Heart right ventricle (tissue), 16 donors: ENCODE measurements at regions of chr6 and their contacts with region 1.

Region 1: DNA sequence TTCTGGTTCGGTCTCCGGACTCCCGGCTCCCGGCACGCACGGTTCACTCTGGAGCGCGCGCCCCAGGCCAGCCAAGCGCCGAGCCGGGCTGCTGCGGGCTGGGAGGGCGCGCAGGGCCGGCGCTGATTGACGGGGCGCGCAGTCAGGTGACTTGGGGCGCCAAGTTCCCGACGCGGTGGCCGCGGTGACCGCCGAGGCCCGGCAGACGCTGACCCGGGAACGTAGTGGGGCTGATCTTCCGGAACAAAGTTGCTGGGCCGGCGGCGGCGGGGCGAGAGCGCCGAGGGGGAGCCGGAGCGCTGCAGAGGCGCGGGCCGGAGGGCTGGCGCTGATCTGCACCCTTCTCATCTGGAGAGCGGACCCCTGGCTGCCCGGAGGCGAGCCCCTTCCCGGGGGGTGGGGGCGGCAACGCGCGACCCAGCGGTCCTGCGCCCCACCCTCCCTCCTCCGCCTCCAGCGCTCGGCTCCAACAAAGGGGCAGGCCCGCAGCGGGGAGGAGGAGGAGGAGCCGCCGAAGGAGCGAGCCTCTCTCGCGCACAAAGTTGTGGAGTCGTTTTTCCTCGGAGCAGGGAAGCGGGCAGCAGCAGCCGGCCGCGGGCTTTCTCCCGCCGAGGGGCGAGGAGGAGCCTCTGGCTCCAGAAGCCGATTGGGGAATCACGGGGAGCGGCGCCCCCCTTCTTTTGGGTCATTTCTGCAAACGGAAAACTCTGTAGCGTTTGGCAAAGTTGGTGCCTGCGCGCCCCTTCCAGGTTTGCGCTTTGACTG is at the start of gene UTRN:
- DNase-seq: peak; percentile 84 to 85
- ATAC-seq: peak; percentile 78 to 87 (median 85)
- H3K4me3 ChIP-seq: peak within 1 kb of the TSS; percentile 67 to 96 (median 82)
- H3K27ac ChIP-seq: peak within 1 kb of the TSS; percentile 93 to 98 (median 96)
- H3K4me1 ChIP-seq: peaks cover 0 to 24% (median 18%) of the 10 kb centered on the region in 9 donors
- H3K27me3 ChIP-seq: no peaks in the 10 kb centered on the region
- CTCF ChIP-seq: peak in 3 of 9 donors; percentile 8 to 23 (median 10)
- total RNA-seq, gene UTRN: 54.4 to 109 (median 85.5) TPM

Region 2: GRCh38 chr6:144149891-144150709 is 134.9 kb before region 1 on chr6 and contains the start of gene STX11:
- intact Hi-C with region 1: loop called in 2 of 10 experiments (anchors 5 kb)
- DNase-seq: peak; percentile 73 to 80
- ATAC-seq: peak; percentile 93 to 98 (median 94)
- H3K4me3 ChIP-seq: peak within 1 kb of the TSS; percentile 59 to 85 (median 78)
- H3K27ac ChIP-seq: peak within 1 kb of the TSS in 9 of 10 donors; percentile 46 to 94 (median 79)
- H3K4me1 ChIP-seq: peaks cover 0 to 47% (median 13%) of the 10 kb centered on the region in 9 donors
- H3K27me3 ChIP-seq: no peaks in the 10 kb centered on the region
- CTCF ChIP-seq: no peak
- total RNA-seq, gene STX11: 6.9 to 15.9 (median 8.9) TPM

Region 3: DNA sequence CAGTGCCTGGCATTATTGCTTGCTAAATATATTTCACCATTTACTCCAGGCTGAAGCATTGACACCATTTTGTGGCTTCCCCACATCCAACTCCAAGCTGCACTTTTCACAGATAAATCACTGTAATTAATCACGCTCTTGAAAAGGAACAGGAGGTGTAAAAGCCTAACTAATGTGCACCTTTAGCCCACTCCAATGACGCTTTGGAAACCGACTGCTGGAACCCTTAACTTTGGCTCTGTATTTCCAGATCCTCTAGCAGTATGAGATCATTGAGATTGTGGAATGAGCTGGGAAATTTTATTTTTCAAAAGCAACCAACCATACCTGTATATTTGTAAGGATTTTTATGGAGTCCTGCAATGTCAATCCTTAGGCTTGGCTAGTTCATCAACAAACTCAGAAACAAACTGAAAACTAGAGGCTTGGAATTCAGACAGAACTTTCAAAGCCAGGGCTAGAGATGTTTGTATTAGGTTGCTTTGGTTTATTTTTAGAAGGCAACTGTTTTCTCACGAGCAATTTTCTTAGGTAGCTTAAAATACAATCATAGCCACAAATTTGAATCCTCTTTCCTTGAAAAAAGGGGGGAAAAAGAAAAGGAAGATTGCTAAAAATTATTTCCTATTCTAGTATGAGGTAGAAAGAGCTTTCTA is 52.7 kb before region 1 on chr6:
- intact Hi-C with region 1: no loop called
- DNase-seq: no peak
- ATAC-seq: no peak
- H3K4me3 ChIP-seq: no peak overlapping the region
- H3K27ac ChIP-seq: peak overlapping the region in 4 of 10 donors; percentile 5 to 59 (median 18)
- H3K4me1 ChIP-seq: peaks cover 0 to 23% (median 14%) of the 10 kb centered on the region in 9 donors
- H3K27me3 ChIP-seq: no peaks in the 10 kb centered on the region
- CTCF ChIP-seq: no peak

Region 4: DNA sequence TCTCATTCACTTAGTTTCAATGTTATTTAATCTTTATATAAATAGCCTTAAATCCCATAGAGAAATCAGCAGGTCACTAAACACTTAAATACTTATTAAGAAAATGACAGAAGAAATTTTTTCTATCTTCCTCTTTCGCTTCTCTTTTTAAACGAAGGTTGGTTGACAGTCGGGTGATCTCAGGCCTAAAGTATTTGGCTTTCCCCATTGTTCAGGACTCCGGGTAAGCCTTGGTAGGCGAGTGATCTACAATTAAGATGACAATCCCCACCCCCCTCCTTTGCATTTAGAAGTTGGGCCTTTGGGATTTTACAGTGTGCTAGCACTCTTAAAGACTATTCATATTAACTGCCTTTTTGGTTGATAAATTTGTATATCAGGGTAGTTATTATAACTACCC is 19.6 kb before region 1 on chr6:
- intact Hi-C with region 1: loop called in 2 of 10 experiments (anchors 1 to 2 kb)
- DNase-seq: peak in 1 of 2 donors; percentile 29
- ATAC-seq: peak; percentile 34 to 75 (median 49)
- H3K4me3 ChIP-seq: no peak overlapping the region
- H3K27ac ChIP-seq: peak overlapping the region; percentile 19 to 91 (median 72)
- H3K4me1 ChIP-seq: peaks cover 7 to 35% (median 26%) of the 10 kb centered on the region in 9 donors
- H3K27me3 ChIP-seq: no peaks in the 10 kb centered on the region
- CTCF ChIP-seq: no peak

Region 5: DNA sequence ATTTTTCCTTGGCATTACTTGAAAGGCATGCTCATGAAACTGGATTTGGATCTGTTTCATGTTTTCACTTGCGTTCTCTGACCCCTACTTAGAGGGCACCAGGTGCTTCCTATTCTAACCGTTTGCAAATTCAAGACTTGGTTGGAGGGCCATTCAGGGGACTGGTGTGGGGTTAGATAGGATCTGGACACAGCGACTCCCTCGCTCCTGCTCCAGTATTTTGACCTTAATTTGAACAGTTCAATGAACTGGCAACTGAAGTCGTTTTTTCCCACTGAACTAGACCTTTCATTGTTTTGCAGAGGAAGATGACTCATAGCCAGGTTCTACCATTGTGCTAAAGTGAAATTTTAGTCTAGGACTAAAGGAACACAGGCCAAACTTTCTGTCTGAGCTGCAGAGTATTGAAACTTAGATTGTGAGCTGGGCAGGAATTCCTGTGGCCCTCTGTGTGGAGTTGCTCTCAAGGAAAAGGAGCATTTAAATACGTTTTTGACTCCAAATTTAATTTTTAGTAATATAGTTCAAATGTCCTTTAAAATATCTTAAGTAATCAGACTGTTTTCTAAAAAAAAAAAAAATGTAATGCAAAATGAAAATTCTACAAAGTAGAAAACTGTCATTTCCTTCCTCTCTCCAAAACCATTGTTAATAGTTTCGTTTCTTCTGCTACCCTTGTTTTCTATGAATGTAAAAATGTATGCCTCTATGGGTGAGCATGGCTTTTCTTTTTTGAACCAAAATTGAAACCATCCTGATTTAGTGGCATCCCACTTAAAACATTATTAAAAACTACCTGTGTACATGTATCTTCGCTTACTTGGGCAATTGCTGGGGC is 64.9 kb after region 1 on chr6:
- intact Hi-C with region 1: loop called in 1 of 10 experiments (anchors 10 kb)
- DNase-seq: peak in 1 of 2 donors; percentile 56
- ATAC-seq: peak; percentile 65 to 91 (median 83)
- H3K4me3 ChIP-seq: peak overlapping the region in 4 of 10 donors; percentile 12 to 24 (median 14)
- H3K27ac ChIP-seq: peak overlapping the region in 9 of 10 donors; percentile 33 to 85 (median 68)
- H3K4me1 ChIP-seq: peaks cover 7 to 100% (median 85%) of the 10 kb centered on the region in 9 donors
- H3K27me3 ChIP-seq: no peaks in the 10 kb centered on the region
- CTCF ChIP-seq: no peak

Region 6: DNA sequence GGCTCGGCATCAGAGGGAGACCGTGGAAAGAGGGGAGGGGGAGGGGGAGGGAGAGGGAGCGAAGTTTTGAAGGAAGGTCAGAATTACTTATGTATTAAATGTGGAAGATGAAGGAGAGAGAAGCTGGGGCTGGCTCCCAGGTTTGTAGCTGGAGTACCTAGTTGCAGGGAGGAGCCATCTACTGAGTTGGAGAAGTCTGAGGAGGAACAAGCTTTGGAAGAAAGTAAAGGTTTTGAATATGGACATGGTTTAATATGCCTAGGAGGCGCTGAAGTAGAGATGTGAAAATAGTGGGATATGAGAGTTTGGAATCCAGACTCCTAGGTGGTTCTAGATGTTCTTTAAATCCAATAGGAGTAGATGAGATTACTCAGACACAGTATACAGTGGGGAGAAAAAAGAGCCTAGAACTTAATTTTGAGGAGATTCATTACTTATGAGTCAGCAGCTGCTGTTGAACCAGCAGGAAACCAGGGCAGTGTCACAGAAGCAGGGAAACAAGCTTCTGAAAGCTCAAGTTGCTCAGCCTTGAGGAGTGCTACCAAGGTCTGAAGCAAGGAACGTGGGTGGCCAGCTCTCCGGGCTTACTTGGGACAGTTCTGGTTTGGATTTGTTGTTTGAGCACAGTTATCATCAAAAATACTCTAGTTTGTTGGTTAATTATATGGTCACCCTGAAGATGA is 149.5 kb after region 1 on chr6:
- intact Hi-C with region 1: loop called in 5 of 10 experiments (anchors 5 to 10 kb)
- DNase-seq: no peak
- ATAC-seq: peak in 6 of 8 donors; percentile 16 to 64 (median 48)
- H3K4me3 ChIP-seq: no peak overlapping the region
- H3K27ac ChIP-seq: peak overlapping the region in 2 of 10 donors; percentile 52 to 61
- H3K4me1 ChIP-seq: peaks cover 3 to 50% (median 18%) of the 10 kb centered on the region in 9 donors
- H3K27me3 ChIP-seq: no peaks in the 10 kb centered on the region
- CTCF ChIP-seq: no peak